GM12878 (cell line): ENCODE measurements at regions of chr12 and their contacts with region 1.

Region 1: GRCh38 chr12:12008931-12009611 is 61.7 kb upstream of the BCL2L14 start:
- DNase-seq: peak; percentile 86
- ATAC-seq: peak; percentile 63
- H3K4me3 ChIP-seq: no peak overlapping the region
- H3K27ac ChIP-seq: peak overlapping the region; percentile 90
- H3K4me1 ChIP-seq: peaks cover 57% of the 10 kb centered on the region
- H3K27me3 ChIP-seq: no peaks in the 10 kb centered on the region
- CTCF ChIP-seq: peak; percentile 33 to 45 (median 41); a peak in 5 of 6 replicates
- EP300 ChIP-seq: no peak; a peak in 1 of 4 replicates
- POLR2A ChIP-seq: no peak
- RAD21 ChIP-seq: peak; percentile 71

Region 2: GRCh38 chr12:11568762-11569478 is 440.2 kb before region 1 on chr12:
- CTCF ChIA-PET with region 1: interaction called, 4 read pairs
- POLR2A ChIA-PET with region 1: no interaction called
- RAD21 ChIA-PET with region 1: interaction called, 5 read pairs
- SMC1A ChIA-PET with region 1: interaction called, 6 read pairs
- in situ Hi-C with region 1: no loop called
- intact Hi-C with region 1: loop called (anchors 2 kb)
- DNase-seq: peak; percentile 96
- ATAC-seq: peak; percentile 77
- H3K4me3 ChIP-seq: peak overlapping the region; percentile 48
- H3K27ac ChIP-seq: peak overlapping the region; percentile 98
- H3K4me1 ChIP-seq: peaks cover 46% of the 10 kb centered on the region
- H3K27me3 ChIP-seq: no peaks in the 10 kb centered on the region
- CTCF ChIP-seq: no peak
- EP300 ChIP-seq: peak; percentile 99
- POLR2A ChIP-seq: no peak
- RAD21 ChIP-seq: no peak

Region 3: GRCh38 chr12:11780521-11781101 is 228.5 kb before region 1 on chr12:
- CTCF ChIA-PET with region 1: no interaction called
- POLR2A ChIA-PET with region 1: interaction called, 4 read pairs
- RAD21 ChIA-PET with region 1: interaction called, 16 read pairs
- SMC1A ChIA-PET with region 1: interaction called, 12 read pairs
- in situ Hi-C with region 1: no loop called
- intact Hi-C with region 1: loop called (anchors 1 kb)
- DNase-seq: peak; percentile 94
- ATAC-seq: peak; percentile 79
- H3K4me3 ChIP-seq: peak overlapping the region; percentile 13; the same call in 1 of the 2 replicates
- H3K27ac ChIP-seq: peak overlapping the region; percentile 95
- H3K4me1 ChIP-seq: peaks cover 67% of the 10 kb centered on the region
- H3K27me3 ChIP-seq: no peaks in the 10 kb centered on the region
- CTCF ChIP-seq: no peak
- EP300 ChIP-seq: peak; percentile 67 to 91; a peak in 2 of 4 replicates
- POLR2A ChIP-seq: peak; percentile 48; the same call in 1 of the 2 replicates
- RAD21 ChIP-seq: 0 out of 2 replicates have a peak, but pooled peaks have one; percentile 3

Region 4: DNA sequence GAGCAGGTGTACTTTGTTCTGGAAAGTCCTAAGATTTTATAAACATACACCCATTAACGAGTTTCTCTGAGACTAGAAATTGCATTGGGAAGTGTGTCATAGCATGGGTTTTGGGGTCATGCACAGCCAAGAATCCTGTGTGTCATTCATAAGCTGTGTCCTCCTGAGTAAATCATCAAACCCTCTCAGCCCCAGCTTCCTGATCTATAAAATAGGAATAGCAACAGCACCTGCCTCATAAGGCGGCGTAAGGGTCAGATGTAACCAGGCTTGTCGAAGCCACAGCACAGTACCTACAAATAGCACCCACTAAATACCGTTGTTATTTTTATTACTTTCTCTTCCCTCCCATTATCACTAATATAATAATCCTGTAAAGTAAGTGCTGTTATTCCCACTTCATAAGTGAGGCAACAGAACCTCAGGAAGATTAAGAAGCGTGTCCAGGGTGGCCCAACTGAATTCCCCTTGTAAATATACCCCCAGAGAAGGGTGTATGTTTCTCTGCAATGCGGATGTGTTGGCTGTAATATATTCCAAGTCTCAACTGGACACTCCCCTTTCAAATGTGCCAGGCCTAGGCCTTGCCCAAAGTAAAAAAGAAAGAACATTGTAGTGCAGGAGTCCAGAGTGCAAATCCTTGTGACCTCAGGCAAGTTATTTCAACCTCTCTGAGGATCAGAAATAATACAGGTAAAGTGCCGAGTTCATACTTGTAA is 126.6 kb before region 1 on chr12:
- CTCF ChIA-PET with region 1: interaction called, 6 read pairs
- POLR2A ChIA-PET with region 1: no interaction called
- RAD21 ChIA-PET with region 1: interaction called, 3 read pairs
- SMC1A ChIA-PET with region 1: interaction called, 7 read pairs
- in situ Hi-C with region 1: no loop called
- intact Hi-C with region 1: loop called (anchors 2 kb)
- DNase-seq: peak; percentile 39
- ATAC-seq: peak; percentile 82
- H3K4me3 ChIP-seq: no peak overlapping the region
- H3K27ac ChIP-seq: peak overlapping the region; percentile 62
- H3K4me1 ChIP-seq: peaks cover 26% of the 10 kb centered on the region
- H3K27me3 ChIP-seq: no peaks in the 10 kb centered on the region
- CTCF ChIP-seq: no peak
- EP300 ChIP-seq: no peak
- POLR2A ChIP-seq: no peak
- RAD21 ChIP-seq: no peak

Region 5: DNA sequence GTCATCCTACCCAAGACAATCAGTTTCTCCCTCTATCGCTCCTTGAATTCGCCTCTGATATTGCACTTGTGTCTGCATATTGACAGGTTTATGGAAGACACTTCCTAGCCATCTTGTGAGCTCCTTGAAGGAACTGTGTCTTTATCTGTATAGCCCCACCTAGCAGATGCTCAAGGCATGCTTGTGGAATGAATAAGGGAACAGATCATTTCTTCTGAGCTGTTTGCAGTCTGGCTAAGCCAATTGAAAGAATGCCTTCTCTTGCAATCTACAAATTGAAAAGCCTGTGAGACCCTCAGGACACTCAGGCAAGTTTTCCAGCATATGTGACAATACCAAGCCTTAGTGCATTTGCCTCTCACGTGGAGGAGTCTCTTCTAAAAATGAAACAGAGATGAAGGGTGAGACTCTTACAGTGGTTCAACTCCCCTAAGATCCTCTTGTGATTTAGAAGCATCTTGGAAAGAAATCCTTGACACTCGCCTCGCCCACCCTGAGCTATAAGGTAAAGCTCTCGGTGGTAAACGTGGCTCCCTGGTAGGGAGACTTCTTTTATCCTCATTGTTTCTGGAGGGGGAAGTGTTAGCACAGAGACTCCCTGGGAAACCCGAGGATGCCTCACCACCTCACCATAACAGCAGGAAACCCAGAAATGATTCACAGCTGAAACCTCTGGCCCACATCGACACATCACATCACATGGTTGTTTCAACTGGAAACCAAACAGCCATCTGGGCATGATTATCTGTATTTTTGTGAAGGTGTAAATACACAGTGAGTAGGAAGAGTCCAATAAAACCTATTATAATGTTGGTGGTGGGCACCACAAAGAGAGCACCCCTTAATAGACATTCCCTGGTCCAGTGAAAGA is 50.6 kb before region 1 on chr12:
- CTCF ChIA-PET with region 1: no interaction called
- POLR2A ChIA-PET with region 1: no interaction called
- RAD21 ChIA-PET with region 1: no interaction called
- SMC1A ChIA-PET with region 1: no interaction called
- in situ Hi-C with region 1: no loop called
- intact Hi-C with region 1: no loop called
- DNase-seq: no peak
- ATAC-seq: peak; percentile 84
- H3K4me3 ChIP-seq: no peak overlapping the region
- H3K27ac ChIP-seq: peak overlapping the region; percentile 5
- H3K4me1 ChIP-seq: peaks cover 16% of the 10 kb centered on the region
- H3K27me3 ChIP-seq: no peaks in the 10 kb centered on the region
- CTCF ChIP-seq: no peak
- EP300 ChIP-seq: 0 out of 4 replicates have a peak, but pooled peaks of 1 of the 2 experiments have one; percentile 14
- POLR2A ChIP-seq: no peak
- RAD21 ChIP-seq: peak; percentile 10; the same call in 1 of the 2 replicates

Region 6: DNA sequence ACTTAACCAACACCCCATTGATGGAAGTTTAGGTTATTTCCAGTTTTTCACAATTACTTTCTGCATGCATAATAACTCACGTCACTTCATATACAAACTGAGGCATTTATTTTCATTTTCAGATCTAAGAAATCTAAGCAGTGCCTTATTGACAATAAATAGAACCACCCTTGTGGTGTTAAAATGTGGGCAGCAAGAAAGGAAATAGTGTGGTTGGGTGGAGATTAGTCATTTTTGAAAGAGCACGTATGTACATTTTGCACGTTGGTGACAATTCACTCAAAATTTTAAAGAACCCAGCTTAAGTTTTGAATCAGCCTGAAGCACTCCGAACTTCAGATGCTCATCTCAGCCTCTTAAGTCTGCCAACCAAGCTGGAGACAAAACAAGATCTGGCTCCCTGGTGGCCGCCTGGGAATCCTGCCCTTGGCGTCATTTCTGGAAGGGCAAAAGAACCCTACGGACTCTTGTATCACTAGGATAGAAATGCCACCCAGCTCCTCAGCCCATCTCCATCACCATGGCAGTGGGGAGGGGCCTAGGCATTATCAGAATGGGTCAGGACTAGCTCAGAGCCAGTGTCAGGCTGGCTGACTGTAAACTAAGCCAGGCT is 27.8 kb before region 1 on chr12:
- CTCF ChIA-PET with region 1: interaction called, 50 read pairs
- POLR2A ChIA-PET with region 1: interaction called, 33 read pairs
- RAD21 ChIA-PET with region 1: interaction called, 40 read pairs
- SMC1A ChIA-PET with region 1: interaction called, 61 read pairs
- in situ Hi-C with region 1: no loop called
- intact Hi-C with region 1: loop called (anchors 1 kb)
- DNase-seq: peak; percentile 98
- ATAC-seq: peak; percentile 90
- H3K4me3 ChIP-seq: peak overlapping the region; percentile 19; the same call in 1 of the 2 replicates
- H3K27ac ChIP-seq: peak overlapping the region; percentile 96
- H3K4me1 ChIP-seq: peaks cover 23% of the 10 kb centered on the region
- H3K27me3 ChIP-seq: no peaks in the 10 kb centered on the region
- CTCF ChIP-seq: no peak
- EP300 ChIP-seq: peak; percentile 99
- POLR2A ChIP-seq: no peak
- RAD21 ChIP-seq: peak; percentile 26; the same call in 1 of the 2 replicates

Region 7: GRCh38 chr12:12107678-12108077 is 98.6 kb after region 1 on chr12:
- CTCF ChIA-PET with region 1: no interaction called
- POLR2A ChIA-PET with region 1: no interaction called
- RAD21 ChIA-PET with region 1: no interaction called
- SMC1A ChIA-PET with region 1: no interaction called
- in situ Hi-C with region 1: no loop called
- intact Hi-C with region 1: no loop called
- DNase-seq: no peak
- ATAC-seq: no peak
- H3K4me3 ChIP-seq: no peak overlapping the region
- H3K27ac ChIP-seq: no peak overlapping the region
- H3K4me1 ChIP-seq: no peaks in the 10 kb centered on the region
- H3K27me3 ChIP-seq: no peaks in the 10 kb centered on the region
- CTCF ChIP-seq: no peak
- EP300 ChIP-seq: no peak
- POLR2A ChIP-seq: no peak
- RAD21 ChIP-seq: no peak